ENCODE measurements at regions of chrX and their contacts with region 1.

Region 1: DNA sequence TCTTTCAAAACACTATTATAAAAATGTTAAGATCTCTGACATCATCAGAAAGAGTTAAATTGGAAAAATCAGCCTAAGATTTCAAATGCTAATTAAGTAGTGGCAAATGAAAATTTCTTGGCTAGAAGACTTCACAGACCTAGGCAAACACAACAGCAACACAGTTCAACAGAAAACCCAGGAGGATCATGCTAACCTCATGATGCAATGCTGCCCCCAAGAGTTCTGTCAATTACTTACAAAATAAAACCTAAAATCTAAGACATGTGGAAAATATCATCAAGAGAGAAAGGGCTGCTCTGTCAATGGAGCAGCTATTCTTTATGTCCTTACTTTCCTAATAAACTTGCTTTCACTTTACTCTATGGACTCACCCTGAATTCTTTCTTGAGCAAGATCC is 21.0 kb downstream of the S100G start:
- DNase-seq: no peak
- H3K4me3 ChIP-seq: no peak overlapping the region
- CTCF ChIP-seq: peak; percentile 12

Region 2: GRCh38 chrX:15849555-15849954 is 821.4 kb before region 1 on chrX:
- CTCF ChIA-PET with region 1: interaction called, 11 read pairs
- POLR2A ChIA-PET with region 1: no interaction called
- DNase-seq: no peak
- H3K4me3 ChIP-seq: no peak overlapping the region
- CTCF ChIP-seq: peak; percentile 15

Region 3: GRCh38 chrX:15930585-15930984 is 740.4 kb before region 1 on chrX:
- CTCF ChIA-PET with region 1: interaction called, 12 read pairs
- POLR2A ChIA-PET with region 1: no interaction called
- DNase-seq: no peak
- H3K4me3 ChIP-seq: no peak overlapping the region
- CTCF ChIP-seq: peak; percentile 17

Region 4: DNA sequence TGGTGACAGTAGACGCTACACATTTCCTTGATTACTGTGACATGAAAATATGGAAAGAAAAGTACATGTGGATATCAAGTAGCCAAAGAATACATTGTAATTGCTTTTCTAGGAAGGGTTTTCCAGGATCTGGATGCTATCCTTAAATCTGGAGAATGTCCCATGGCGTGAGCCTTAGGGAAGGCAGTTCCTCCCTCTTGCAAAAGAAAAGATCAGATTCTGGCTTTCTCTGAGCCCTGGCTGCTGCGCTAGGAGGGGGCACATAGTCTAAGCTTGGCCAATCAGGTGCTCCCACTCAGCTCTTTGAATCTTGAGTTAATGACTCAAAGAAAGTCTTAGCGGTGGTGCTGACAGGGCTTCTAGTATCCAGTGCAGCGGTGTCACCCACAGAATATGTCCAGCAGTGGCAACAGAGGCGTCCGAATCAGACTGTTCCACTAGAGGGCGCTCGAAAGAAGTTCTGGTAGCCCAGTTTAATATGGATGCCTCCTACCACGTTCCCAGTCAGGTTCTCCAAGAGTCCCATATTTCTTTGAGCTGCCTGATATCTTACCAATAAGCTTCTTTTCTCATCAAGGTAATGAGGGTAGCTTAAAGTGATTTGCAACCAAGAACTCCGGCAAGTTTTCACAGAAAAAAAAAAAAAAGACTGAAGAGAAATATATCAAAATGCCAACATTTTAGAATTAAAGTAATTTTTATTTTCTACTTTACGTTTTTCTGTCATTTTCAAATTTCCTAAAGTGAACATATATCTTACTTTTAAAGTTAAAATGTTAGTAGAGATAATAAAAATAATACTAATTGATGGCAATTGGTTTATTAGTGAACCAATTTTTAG is 234.4 kb before region 1 on chrX:
- CTCF ChIA-PET with region 1: interaction called, 25 read pairs
- POLR2A ChIA-PET with region 1: no interaction called
- DNase-seq: no peak
- H3K4me3 ChIP-seq: no peak overlapping the region
- CTCF ChIP-seq: peak; percentile 62

Measured in AG04449 (cell line).